Common myeloid progenitor, CD34-positive (primary cell): ENCODE measurements at regions of chr5 and their contacts with region 1.

Region 1: GRCh38 chr5:147822686-147823491 is 8.6 kb downstream of the SPINK1 start:
- DNase-seq: peak; percentile 79 to 91 (median 88)
- H3K4me3 ChIP-seq: no peak overlapping the region
- H3K27ac ChIP-seq: no peak overlapping the region
- H3K4me1 ChIP-seq: peaks cover 0 to 5% (median 2%) of the 10 kb centered on the region in 4 experiments
- H3K27me3 ChIP-seq: no peaks in the 10 kb centered on the region

Region 2: GRCh38 chr5:147628058-147628895 is 194.6 kb before region 1 on chr5:
- CTCF ChIA-PET with region 1: interaction called, 183 read pairs
- POLR2A ChIA-PET with region 1: no interaction called
- DNase-seq: peak; percentile 76 to 86 (median 77)
- H3K4me3 ChIP-seq: no peak overlapping the region
- H3K27ac ChIP-seq: no peak overlapping the region
- H3K4me1 ChIP-seq: no peaks in the 10 kb centered on the region
- H3K27me3 ChIP-seq: no peaks in the 10 kb centered on the region

Region 3: DNA sequence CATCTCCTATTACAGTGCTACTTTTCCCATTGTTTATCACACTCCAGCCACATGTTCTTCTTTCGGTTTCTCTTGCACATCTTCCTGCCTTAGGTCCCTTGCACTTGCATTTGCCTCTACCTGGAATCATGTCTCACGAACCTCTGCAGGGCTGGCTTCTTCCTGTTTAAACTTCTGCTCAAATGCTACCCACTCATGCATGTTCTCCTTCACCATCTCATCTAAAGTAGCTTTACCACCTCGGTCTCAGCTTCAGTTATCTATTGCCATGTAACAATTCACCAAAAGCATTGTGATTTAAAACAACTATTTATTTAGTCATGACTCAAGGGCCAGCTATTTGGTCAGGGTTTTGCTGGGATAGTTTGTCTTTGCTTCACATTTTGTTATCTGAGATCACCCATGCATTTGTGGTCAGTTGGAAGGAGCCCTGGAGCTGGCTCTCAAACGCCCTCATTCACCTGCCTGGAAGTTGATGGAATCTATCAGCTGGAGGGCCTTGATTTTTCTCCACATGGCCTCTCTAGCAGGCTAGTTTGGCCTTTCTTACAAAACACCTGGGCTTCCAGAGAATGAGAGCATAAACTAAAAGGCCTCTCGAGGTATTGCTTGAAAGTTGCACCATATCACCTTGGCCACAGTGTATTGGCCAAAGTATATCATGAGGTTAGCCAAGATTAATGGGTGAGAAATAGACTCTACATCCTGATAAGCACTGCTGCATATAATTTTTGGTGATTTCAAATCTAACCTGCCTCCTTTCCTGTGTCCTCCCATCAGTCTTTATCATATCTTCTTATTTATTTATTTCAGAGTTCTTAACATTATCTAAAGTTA is 12.8 kb before region 1 on chr5:
- CTCF ChIA-PET with region 1: interaction called, 10 read pairs
- POLR2A ChIA-PET with region 1: no interaction called
- DNase-seq: no peak
- H3K4me3 ChIP-seq: no peak overlapping the region
- H3K27ac ChIP-seq: no peak overlapping the region
- H3K4me1 ChIP-seq: peaks cover 0 to 8% (median 5%) of the 10 kb centered on the region in 4 experiments
- H3K27me3 ChIP-seq: no peaks in the 10 kb centered on the region

Region 4: DNA sequence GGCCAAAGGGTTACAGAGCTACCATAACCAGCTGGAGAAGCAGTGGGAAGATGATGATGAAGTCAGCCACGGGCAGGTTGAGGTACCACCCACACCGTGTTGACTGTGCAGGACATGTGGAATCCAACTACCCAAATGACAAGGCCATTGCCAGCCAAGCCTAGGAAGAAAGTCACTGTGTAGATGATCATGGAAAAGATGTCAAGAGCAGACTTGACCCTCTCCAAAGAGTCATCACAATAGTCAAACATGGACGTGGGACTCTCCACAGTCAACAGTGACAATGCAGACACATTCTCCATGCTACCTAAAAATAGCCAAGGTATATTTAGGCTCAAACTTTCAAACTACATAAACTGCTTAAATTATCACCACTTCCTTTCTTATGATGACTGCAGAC is 29.5 kb after region 1 on chr5:
- CTCF ChIA-PET with region 1: interaction called, 11 read pairs
- POLR2A ChIA-PET with region 1: no interaction called
- DNase-seq: no peak
- H3K4me3 ChIP-seq: no peak overlapping the region
- H3K27ac ChIP-seq: no peak overlapping the region
- H3K4me1 ChIP-seq: peaks cover 11 to 25% (median 13%) of the 10 kb centered on the region in 4 experiments
- H3K27me3 ChIP-seq: no peaks in the 10 kb centered on the region